Activated CD4-positive, alpha-beta T cell treated with anti-CD3 and anti-CD28 coated beads for 36 hours (primary cell): ENCODE measurements at regions of chr6 and their contacts with region 1.

Region 1: GRCh38 chr6:28895134-28895812 is 28.5 kb downstream of the TRIM27 start:
- DNase-seq: peak; percentile 94
- ATAC-seq: peak; percentile 82
- H3K4me3 Mint-ChIP-seq: peak overlapping the region; percentile 98
- H3K27ac Mint-ChIP-seq: peak overlapping the region; percentile 99
- H3K4me1 Mint-ChIP-seq: peaks cover 9% of the 10 kb centered on the region
- H3K27me3 Mint-ChIP-seq: no peaks in the 10 kb centered on the region

Region 2: DNA sequence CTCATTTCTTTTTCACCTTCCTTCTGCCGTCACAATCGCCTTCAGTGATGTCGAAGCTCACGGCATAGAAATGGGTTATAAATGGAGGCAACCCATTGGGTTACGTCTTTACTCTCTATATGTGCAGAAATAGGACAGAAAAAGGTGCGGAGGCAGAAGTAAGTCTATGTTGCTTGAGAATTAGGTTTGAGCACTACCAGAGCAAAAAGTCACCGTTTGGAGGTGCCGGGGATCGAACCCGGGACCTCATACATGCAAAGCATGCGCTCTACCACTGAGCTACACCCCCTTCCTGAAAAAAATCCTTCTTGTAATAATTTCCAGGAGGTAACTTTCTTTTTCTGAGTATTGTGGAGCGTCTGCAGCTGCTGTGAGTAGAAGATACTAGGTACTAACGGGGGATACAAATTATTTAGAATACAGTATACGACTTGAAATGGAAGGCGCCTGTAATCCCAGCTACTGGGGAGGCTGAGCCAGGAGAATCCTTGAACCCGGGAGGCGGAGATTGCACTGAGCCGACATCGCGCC is 105.7 kb before region 1 on chr6:
- CTCF ChIA-PET with region 1: no interaction called
- POLR2A ChIA-PET with region 1: no interaction called
- intact Hi-C with region 1: no loop called
- DNase-seq: peak; percentile 67
- ATAC-seq: peak; percentile 67
- H3K4me3 Mint-ChIP-seq: peak overlapping the region; percentile 66
- H3K27ac Mint-ChIP-seq: peak overlapping the region; percentile 6
- H3K4me1 Mint-ChIP-seq: peaks cover 15% of the 10 kb centered on the region
- H3K27me3 Mint-ChIP-seq: peaks cover 79% of the 10 kb centered on the region

Region 3: DNA sequence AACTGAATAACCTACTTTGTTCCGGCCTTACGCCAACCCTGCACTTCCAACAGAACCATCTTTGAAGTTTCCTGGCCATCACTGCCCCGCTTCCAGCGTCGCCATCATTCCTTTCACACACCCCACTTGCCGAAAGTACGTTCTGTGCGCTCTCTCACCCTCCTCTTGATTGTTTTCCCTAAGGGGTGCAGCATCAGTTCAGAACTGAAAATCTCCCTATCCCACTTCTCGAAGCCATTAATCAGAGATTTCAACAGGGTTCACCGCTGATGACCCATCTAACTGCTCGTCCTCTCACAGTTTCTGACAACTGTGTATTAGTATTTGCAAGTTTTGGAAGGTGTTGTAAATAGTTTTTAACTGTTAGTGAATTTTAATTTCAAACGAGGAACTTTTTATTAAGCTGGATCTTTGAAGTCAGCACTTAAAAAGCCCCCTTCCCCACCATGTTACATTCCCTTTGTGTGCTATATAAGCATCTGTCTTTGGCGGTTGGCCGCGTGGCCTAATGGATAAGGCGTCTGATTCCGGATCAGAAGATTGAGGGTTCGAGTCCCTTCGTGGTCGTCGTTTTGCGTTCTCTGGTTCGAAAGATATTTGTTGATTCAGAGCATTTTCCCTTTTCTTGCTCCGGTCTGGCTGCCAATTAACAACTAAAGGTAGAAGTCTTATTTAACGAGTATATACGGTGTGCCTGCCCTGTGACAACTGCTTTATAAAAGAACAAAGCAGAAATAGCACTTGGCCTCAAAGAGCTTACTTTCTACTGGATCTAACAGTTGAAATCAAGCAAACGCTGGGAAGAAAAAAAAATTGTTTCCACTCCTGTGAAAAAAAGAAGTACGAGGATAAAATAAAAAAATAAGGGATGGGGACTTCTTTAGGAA is 14.1 kb before region 1 on chr6:
- CTCF ChIA-PET with region 1: interaction called, 13 read pairs
- POLR2A ChIA-PET with region 1: interaction called, 20 read pairs
- intact Hi-C with region 1: loop called (anchors 1 kb)
- DNase-seq: peak; percentile 79
- ATAC-seq: no peak
- H3K4me3 Mint-ChIP-seq: peak overlapping the region; percentile 57
- H3K27ac Mint-ChIP-seq: peak overlapping the region; percentile 69
- H3K4me1 Mint-ChIP-seq: peaks cover 29% of the 10 kb centered on the region
- H3K27me3 Mint-ChIP-seq: peaks cover 3% of the 10 kb centered on the region

Region 4: GRCh38 chr6:28923318-28924102 is 28.2 kb after region 1 on chr6 and contains the start of gene TRIM27:
- CTCF ChIA-PET with region 1: interaction called, 6 read pairs
- POLR2A ChIA-PET with region 1: interaction called, 10 read pairs
- intact Hi-C with region 1: loop called (anchors 1 kb)
- DNase-seq: peak; percentile 88
- ATAC-seq: peak; percentile 81
- H3K4me3 Mint-ChIP-seq: peak within 1 kb of the TSS; percentile 96
- H3K27ac Mint-ChIP-seq: peak within 1 kb of the TSS; percentile 88
- H3K4me1 Mint-ChIP-seq: peaks cover 36% of the 10 kb centered on the region
- H3K27me3 Mint-ChIP-seq: no peaks in the 10 kb centered on the region
- total RNA-seq, gene TRIM27: 48.5 to 54.6 TPM